HEK293 (cell line): ENCODE measurements at regions of chr15 and their contacts with region 1.

Region 1: DNA sequence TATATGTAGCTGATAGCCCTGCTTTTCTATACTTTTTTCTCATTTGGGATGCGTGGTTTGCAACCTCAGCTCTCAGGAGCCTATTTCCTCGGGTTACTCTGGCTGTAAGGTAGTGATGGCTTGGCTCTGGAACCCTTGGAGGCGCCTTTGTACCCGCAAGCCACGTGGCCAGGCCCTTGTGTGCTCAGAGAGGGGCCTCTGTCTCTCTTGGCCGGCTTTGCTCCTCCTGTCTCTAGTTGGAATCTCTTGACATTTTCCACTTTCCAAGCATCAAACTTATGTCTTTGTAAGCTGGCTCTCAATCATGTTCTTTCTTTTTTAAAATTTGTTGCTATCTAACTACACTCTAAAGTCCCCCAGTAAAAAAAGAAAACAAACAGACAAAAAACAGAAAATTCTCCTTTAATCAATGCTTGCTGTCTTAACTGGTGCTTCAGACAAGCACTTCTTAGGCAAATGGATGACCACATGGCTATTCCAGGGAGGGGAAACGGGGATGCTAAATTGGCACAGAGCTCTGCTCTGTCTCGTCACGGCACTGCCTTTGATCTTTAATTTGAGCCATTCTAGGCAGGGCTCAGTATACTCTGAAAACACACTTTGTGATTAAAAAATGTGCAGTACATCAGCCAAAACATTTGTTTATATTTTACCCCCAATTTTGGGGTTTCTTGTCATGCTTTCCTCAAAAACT is 180.4 kb upstream of the NR2E3 start:
- H3K4me3 ChIP-seq: no peak overlapping the region
- H3K27ac ChIP-seq: no peak overlapping the region
- H3K4me1 ChIP-seq: peaks cover 4% of the 10 kb centered on the region; the same call in 1 of the 2 replicates
- CTCF ChIP-seq: no peak

Region 2: DNA sequence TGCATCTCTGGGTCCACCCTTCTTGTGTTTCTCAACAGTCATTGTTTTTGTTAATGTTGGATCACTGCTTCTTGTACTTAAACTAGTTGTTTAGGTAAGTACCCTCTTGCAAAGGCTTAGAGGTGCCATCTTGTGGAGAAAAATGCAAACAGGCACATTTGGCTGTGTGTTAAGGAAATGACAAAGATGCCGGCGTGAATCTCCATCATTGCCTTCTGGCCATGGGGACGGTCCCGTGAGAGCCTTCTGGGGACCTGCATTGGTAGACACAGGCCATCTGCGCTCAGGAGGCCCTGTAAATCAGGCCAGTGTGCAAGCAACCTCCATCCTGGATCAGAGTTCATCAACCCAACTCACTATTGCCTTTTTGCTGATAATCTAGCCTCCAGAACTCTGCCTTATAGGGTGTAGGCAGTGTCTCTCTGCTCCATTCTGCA is 21.8 kb after region 1 on chr15:
- CTCF ChIA-PET with region 1: interaction called, 12 read pairs
- POLR2A ChIA-PET with region 1: no interaction called
- H3K4me3 ChIP-seq: no peak overlapping the region
- H3K27ac ChIP-seq: no peak overlapping the region
- H3K4me1 ChIP-seq: no peaks in the 10 kb centered on the region
- CTCF ChIP-seq: peak; percentile 75; the same call in 1 of the 2 replicates

Region 3: DNA sequence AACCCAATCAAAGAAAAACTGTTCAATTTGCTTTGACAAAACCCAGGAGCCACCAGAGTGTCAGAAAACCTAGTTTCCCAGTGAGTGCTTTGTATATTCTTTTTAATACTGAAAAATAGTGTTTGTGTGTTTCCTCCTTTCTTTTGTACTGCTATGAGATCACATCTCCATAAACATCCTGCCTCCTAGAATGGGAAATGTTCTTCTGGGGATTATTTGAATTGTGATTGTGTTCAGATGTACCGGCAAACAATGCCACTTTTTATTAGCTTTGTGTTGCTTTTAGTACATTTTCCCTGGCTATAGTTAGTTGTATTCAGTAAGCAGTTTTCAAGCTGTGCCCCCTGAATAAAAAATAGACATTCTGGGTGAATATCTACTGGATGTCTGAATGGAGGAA is 32.4 kb after region 1 on chr15:
- CTCF ChIA-PET with region 1: no interaction called
- POLR2A ChIA-PET with region 1: no interaction called
- H3K4me3 ChIP-seq: no peak overlapping the region
- H3K27ac ChIP-seq: no peak overlapping the region
- H3K4me1 ChIP-seq: no peaks in the 10 kb centered on the region
- CTCF ChIP-seq: no peak